Motor neuron (in vitro differentiated cells): ENCODE measurements at regions of chr18 and their contacts with region 1.

Region 1: DNA sequence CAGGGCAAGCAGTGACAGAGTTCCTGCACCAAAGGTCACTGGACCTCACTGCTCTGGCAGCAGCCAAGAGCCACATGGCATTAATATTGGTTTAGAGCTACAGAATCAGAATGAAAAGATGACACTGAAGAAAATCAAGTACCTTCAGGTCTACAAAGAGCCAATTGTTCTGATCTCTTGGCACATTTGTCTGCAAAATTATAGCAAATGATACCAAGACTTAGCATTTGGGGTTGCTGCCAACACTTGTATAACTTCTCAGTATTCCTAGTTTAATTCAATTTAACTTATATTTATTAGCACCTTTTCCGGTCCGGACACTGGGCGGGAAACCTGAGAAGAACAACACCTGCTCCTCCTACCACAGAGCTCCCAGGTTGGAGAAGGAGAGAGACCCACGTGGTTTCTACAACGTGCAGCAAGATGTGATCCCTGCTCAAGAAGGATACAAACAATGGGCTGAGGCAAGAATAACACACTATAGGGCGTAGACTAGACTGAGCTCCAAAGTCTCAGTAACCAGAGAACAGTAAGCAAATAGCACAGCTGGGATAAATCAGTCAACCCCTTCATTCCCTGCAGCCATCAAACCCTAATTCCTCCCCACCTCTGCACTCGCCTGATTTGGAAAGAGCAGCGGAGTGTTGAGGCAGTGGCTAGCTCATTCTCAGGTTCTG is 2.4 kb downstream of the LRRC30 start:
- ATAC-seq: no peak
- H3K4me3 ChIP-seq: no peak overlapping the region
- H3K27ac ChIP-seq: no peak overlapping the region
- H3K4me1 ChIP-seq: no peaks in the 10 kb centered on the region

Region 2: GRCh38 chr18:7117390-7118355 is 115.6 kb before region 1 on chr18 and contains the start of gene LAMA1:
- in situ Hi-C with region 1: no loop called
- ATAC-seq: peak in 7 of 8 experiments; percentile 23 to 85 (median 81)
- H3K4me3 ChIP-seq: peak within 1 kb of the TSS; percentile 53 to 72 (median 60)
- H3K27ac ChIP-seq: no peak within 1 kb of the TSS
- H3K4me1 ChIP-seq: peaks cover 0 to 3% of the 10 kb centered on the region in 2 donors
- total RNA-seq, gene LAMA1: 0.18 to 37.8 (median 7.6) TPM

Region 3: DNA sequence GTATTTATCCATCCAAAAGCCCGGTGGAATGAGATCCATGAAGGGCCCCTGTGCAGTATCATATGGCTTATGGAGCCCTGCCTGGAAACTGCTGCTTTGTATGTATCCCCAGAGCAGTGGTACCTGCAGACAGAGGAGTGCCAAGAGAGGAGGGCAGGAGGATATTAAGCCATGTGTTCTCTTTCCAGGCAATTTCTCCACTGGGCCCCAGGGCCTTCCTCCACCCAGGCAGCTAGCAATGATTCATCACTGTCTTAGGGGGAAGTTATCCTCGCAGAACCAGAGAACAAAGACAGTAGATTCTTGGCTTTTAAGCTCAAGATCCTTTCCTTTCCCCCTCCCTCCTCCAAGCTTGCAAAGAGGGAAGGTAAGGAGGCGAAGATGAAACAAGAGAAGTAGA is 95.7 kb after region 1 on chr18:
- in situ Hi-C with region 1: loop called in 1 of 9 experiments (anchors 25 kb)
- ATAC-seq: peak in 1 of 8 experiments; percentile 77
- H3K4me3 ChIP-seq: no peak overlapping the region
- H3K27ac ChIP-seq: no peak overlapping the region
- H3K4me1 ChIP-seq: peaks cover 3 to 8% of the 10 kb centered on the region in 2 donors